ENCODE measurements at regions of chr1 and their contacts with region 1.

Region 1: GRCh38 chr1:15430787-15431570 is 7.3 kb upstream of the CTRC start:
- DNase-seq: peak; percentile 65 to 87 (median 78)
- ATAC-seq: peak; percentile 81
- H3K4me3 ChIP-seq: no peak overlapping the region
- H3K4me3 Mint-ChIP-seq: no peak overlapping the region
- H3K27ac ChIP-seq: peak overlapping the region in 1 of 2 experiments; percentile 31
- H3K27ac Mint-ChIP-seq: peak overlapping the region; percentile 10
- H3K4me1 ChIP-seq: no peaks in the 10 kb centered on the region
- H3K4me1 Mint-ChIP-seq: no peaks in the 10 kb centered on the region
- H3K27me3 ChIP-seq: no peaks in the 10 kb centered on the region
- H3K27me3 Mint-ChIP-seq: no peaks in the 10 kb centered on the region
- CTCF ChIP-seq: peak; percentile 98

Region 2: DNA sequence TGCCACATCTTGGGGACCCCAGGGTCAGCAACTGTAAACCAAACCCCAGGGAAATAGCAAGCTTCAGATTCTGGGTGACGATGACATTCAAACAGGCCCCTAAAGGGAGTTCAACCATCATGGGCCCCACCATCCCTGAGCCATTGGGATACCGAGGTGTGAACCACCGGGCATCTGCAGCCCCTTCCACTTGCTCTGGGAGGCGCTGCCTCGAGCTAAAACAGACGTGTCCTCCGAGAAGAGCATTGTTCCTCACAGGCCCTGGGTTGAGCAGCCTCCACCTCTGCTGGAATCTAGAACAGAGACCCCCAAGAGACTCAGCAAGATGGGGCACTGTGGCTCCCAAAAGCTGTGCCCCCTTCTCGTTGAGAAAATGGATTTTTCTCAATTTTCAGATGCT is 40.3 kb before region 1 on chr1:
- CTCF ChIA-PET with region 1: interaction called, 4 read pairs
- POLR2A ChIA-PET with region 1: no interaction called
- intact Hi-C with region 1: loop called in 1 of 2 experiments (anchors 2 kb)
- DNase-seq: no peak
- ATAC-seq: no peak
- H3K4me3 ChIP-seq: no peak overlapping the region
- H3K4me3 Mint-ChIP-seq: no peak overlapping the region
- H3K27ac ChIP-seq: no peak overlapping the region
- H3K27ac Mint-ChIP-seq: no peak overlapping the region
- H3K4me1 ChIP-seq: peaks cover 9% of the 10 kb centered on the region
- H3K4me1 Mint-ChIP-seq: peaks cover 8% of the 10 kb centered on the region
- H3K27me3 ChIP-seq: no peaks in the 10 kb centered on the region
- H3K27me3 Mint-ChIP-seq: peaks cover 7% of the 10 kb centered on the region
- CTCF ChIP-seq: no peak

Region 3: DNA sequence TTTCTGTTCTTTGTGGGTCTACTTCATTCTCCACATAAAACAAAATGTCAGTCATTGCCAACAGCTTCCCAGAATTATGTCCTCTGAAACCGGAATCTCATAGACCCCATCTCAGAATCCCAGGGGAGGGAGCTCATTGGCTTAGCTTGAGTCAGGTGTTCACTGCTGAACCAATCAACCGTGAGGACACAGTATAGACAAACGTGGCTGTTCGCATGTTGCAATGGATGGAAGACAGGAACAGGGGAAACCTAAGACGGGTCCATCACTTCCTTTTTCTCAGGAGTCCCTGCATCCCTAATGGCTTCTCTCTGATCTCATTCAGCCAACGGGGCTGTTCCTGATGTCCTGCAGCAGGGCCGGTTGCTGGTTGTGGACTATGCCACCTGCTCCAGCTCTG is 34.7 kb after region 1 on chr1:
- CTCF ChIA-PET with region 1: no interaction called
- POLR2A ChIA-PET with region 1: no interaction called
- intact Hi-C with region 1: no loop called
- DNase-seq: no peak
- ATAC-seq: no peak
- H3K4me3 ChIP-seq: no peak overlapping the region
- H3K4me3 Mint-ChIP-seq: no peak overlapping the region
- H3K27ac ChIP-seq: no peak overlapping the region
- H3K27ac Mint-ChIP-seq: no peak overlapping the region
- H3K4me1 ChIP-seq: no peaks in the 10 kb centered on the region
- H3K4me1 Mint-ChIP-seq: no peaks in the 10 kb centered on the region
- H3K27me3 ChIP-seq: no peaks in the 10 kb centered on the region
- H3K27me3 Mint-ChIP-seq: no peaks in the 10 kb centered on the region
- CTCF ChIP-seq: no peak

Measured in CD8-positive, alpha-beta T cell (primary cell).